GM10248 (cell line): ENCODE measurements at regions of chr6 and their contacts with region 1.

Region 1: DNA sequence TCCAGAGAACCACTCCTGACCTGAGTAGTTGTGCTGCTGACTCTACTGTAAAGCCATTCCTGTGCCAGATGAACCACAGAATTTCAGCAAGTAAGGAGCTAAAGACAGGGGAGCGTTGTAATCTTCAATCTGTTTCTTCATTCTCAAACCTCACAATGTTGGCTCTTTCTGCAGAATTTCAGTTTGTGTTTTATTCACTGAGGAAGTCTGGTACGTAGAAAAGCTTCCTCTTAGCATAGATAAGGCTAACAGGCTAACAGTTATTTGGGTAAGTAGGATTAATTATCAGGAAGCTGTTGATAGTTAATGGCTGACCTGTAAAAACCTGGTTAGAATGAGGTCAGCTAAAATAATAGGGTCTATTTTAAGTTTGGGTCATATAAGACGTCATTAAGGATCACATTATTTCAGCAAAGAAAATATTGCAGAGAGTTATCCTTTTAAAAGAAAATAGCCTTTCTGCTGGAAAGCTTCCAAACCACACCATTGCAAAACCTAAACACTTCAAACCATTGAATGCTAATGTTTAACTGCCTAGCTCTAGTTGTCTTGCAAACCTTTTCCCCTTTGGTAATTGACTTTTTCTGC is 14.1 kb upstream of the TENT5A start:
- DNase-seq: no peak
- CTCF ChIP-seq: no peak

Region 2: GRCh38 chr6:81636930-81637568 is 129.5 kb before region 1 on chr6:
- CTCF ChIA-PET with region 1: no interaction called
- POLR2A ChIA-PET with region 1: no interaction called
- DNase-seq: no peak
- CTCF ChIP-seq: no peak

Region 3: GRCh38 chr6:81752138-81752920 is 14.2 kb before region 1 on chr6 and contains the start of gene TENT5A:
- CTCF ChIA-PET with region 1: interaction called, 17 read pairs
- POLR2A ChIA-PET with region 1: interaction called, 3 read pairs
- DNase-seq: peak; percentile 85
- CTCF ChIP-seq: no peak